ENCODE measurements at regions of chr14 and their contacts with region 1.

Region 1: GRCh38 chr14:30558675-30559555 is at the start of gene G2E3:
- DNase-seq: peak; percentile 89
- H3K4me3 Mint-ChIP-seq: peak within 1 kb of the TSS; percentile 99
- H3K27ac Mint-ChIP-seq: peak within 1 kb of the TSS; percentile 100
- H3K4me1 Mint-ChIP-seq: peaks cover 25% of the 10 kb centered on the region
- H3K27me3 Mint-ChIP-seq: no peaks in the 10 kb centered on the region
- total RNA-seq, gene G2E3: 24.7 and 26.4 TPM in 2 replicates

Region 2: DNA sequence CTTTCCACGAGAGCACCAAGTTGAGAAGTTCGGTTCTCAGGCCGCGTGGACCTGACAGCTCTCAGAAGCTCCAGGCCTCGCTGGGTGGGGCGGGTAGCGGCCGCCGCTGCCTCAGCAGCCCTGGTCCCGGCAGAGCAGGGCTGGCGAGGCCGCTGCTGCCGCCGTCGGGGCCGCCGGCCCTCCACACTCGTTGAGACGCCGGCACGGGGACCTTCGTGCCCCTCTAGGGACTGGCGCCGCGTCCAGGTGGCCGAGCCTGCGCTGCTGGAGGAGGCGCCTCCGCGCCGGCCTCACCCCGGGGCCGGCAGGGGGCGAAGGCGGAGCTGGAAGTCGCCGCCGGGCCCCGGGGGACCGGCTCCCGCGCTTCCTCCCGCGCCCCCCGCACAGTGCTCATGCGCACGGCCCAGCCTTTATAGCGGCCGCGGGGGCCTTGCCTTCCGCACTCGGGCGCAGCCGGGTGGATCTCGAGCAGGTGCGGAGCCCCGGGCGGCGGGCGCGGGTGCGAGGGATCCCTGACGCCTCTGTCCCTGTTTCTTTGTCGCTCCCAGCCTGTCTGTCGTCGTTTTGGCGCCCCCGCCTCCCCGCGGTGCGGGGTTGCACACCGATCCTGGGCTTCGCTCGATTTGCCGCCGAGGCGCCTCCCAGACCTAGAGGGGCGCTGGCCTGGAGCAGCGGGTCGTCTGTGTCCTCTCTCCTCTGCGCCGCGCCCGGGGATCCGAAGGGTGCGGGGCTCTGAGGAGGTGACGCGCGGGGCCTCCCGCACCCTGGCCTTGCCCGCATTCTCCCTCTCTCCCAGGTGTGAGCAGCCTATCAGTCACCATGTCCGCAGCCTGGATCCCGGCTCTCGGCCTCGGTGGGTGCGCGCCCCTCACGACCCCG is 315.4 kb after region 1 on chr14 and contains the start of gene COCH:
- intact Hi-C with region 1: loop called (anchors 10 kb)
- DNase-seq: no peak
- H3K4me3 Mint-ChIP-seq: peak within 1 kb of the TSS; percentile 82
- H3K27ac Mint-ChIP-seq: no peak within 1 kb of the TSS
- H3K4me1 Mint-ChIP-seq: peaks cover 10% of the 10 kb centered on the region
- H3K27me3 Mint-ChIP-seq: peaks cover 76% of the 10 kb centered on the region
- total RNA-seq, gene COCH: 1.7 and 1.9 TPM in 2 replicates

Measured in activated T-helper 2 cell treated with anti-CD3 and anti-CD28 coated beads, Interferon-gamma antibody, Interleukin-2, Interleukin-4, amounts not matched to agents 10 μg/mL and 5 μg/mL and 100 μg/mL, durations not matched to agents 14 hours and 24 hours and 36 hours (primary cell).